ENCODE measurements at regions of chr5 and their contacts with region 1.

Region 1: DNA sequence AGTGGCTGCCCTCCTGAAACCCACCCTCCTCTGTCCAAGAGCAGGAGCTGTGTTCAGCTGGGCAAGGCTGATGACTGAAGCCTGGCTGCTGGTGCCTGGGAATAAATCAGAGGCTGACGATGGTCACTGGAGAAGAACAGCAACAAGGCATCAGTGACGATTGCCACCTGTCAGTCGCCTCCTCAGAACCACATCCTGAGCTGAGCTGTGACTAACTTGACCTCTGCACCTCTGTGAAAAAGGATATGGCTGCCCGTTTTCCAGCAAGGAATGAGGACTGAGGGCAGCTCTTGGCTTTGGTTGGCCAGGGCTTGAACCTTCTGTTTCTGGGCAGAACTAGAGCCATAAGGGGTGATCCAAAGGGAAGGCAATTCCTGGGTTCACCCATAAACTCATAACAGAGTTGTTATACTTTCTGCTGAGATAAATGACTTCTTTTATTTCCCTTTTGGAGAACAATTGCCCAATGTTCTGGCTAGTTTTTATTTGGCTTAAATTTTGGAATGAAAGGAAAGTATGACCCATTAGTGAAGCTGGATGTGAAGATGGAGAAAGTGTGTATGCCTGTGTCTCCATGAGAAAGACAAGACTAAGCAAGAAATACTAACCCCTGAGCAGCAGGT is 40.1 kb downstream of the TRIP13 start:
- DNase-seq: no peak
- H3K4me3 ChIP-seq: no peak overlapping the region
- H3K27ac ChIP-seq: no peak overlapping the region
- H3K4me1 ChIP-seq: no peaks in the 10 kb centered on the region
- H3K27me3 ChIP-seq: no peaks in the 10 kb centered on the region
- CTCF ChIP-seq: no peak

Region 2: GRCh38 chr5:129820-130219 is 802.9 kb before region 1 on chr5:
- CTCF ChIA-PET with region 1: no interaction called
- dilution Hi-C with region 1: no loop called
- in situ Hi-C with region 1: no loop called
- intact Hi-C with region 1: no loop called
- DNase-seq: peak; percentile 9
- H3K4me3 ChIP-seq: no peak overlapping the region
- H3K27ac ChIP-seq: no peak overlapping the region
- H3K4me1 ChIP-seq: no peaks in the 10 kb centered on the region
- H3K27me3 ChIP-seq: peaks cover 2% of the 10 kb centered on the region
- CTCF ChIP-seq: no peak

Region 3: GRCh38 chr5:969408-969839 is 36.7 kb after region 1 on chr5:
- CTCF ChIA-PET with region 1: no interaction called
- dilution Hi-C with region 1: loop called (anchors 5 kb)
- in situ Hi-C with region 1: no loop called
- intact Hi-C with region 1: no loop called
- DNase-seq: no peak
- H3K4me3 ChIP-seq: no peak overlapping the region
- H3K27ac ChIP-seq: no peak overlapping the region
- H3K4me1 ChIP-seq: no peaks in the 10 kb centered on the region
- H3K27me3 ChIP-seq: peaks cover 19% of the 10 kb centered on the region
- CTCF ChIP-seq: no peak

Region 4: DNA sequence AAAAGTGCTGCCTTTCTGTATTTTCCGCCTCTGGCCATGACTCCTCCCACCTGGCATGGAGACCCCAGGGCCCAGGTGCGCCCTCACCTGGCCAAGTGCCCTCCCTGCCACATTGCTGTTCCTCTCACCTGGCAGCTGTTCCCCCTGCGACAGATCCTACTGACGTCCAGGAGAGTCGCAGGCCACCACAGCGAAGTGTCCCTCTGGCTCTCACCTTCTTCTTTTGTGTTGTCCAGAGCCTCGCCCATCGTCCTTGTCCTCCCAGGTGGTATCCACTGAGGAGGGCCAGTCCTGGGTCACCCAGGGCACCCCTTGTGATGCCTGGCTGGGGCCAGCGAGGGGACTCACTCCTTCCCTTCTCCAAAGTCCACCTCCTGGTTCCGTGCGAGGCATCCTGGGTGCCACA is 78.5 kb after region 1 on chr5:
- CTCF ChIA-PET with region 1: no interaction called
- dilution Hi-C with region 1: no loop called
- in situ Hi-C with region 1: no loop called
- intact Hi-C with region 1: loop called (anchors 2 kb)
- DNase-seq: no peak
- H3K4me3 ChIP-seq: no peak overlapping the region
- H3K27ac ChIP-seq: no peak overlapping the region
- H3K4me1 ChIP-seq: peaks cover 13% of the 10 kb centered on the region
- H3K27me3 ChIP-seq: peaks cover 27% of the 10 kb centered on the region
- CTCF ChIP-seq: peak; percentile 54 to 60

Region 5: DNA sequence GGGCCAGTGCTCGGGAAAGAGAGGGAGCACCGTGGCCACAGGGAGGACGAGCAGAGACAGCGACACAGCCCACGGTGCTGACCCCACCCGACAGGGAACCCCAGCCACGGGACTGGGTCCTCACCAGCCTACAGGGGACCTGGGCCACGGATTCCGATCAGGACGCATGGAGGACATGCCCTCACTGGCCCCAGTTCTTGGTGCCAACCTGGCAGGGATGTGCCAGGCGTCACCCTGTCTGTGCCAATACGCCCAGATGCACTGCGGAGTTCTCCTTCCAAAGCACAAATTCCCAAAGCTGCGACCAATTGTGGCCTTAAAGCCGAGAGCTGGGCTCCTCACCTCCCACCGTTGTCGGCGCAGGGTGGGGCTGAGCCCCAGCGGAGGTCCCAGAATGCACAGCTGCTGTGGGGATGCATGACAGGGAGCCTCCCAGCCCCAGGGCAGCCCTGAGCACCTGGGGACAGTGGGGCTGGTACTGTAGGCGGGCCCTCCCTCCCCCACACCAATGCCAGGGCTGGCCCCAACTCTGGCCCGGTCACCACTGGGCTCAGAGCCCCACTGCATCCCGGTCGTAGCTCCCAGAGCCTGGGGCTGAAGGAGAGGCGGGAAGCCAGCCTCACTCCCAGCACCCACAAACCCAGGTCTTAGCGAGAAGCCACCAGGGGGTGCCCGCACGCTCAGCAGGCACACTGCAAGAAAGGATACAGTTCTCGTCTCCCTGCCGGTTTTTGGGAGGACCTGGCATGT is 120.1 kb after region 1 on chr5:
- CTCF ChIA-PET with region 1: no interaction called
- dilution Hi-C with region 1: loop called (anchors 10 kb)
- in situ Hi-C with region 1: no loop called
- intact Hi-C with region 1: no loop called
- DNase-seq: no peak
- H3K4me3 ChIP-seq: no peak overlapping the region
- H3K27ac ChIP-seq: no peak overlapping the region
- H3K4me1 ChIP-seq: no peaks in the 10 kb centered on the region
- H3K27me3 ChIP-seq: no peaks in the 10 kb centered on the region
- CTCF ChIP-seq: peak; percentile 17 to 44

Region 6: DNA sequence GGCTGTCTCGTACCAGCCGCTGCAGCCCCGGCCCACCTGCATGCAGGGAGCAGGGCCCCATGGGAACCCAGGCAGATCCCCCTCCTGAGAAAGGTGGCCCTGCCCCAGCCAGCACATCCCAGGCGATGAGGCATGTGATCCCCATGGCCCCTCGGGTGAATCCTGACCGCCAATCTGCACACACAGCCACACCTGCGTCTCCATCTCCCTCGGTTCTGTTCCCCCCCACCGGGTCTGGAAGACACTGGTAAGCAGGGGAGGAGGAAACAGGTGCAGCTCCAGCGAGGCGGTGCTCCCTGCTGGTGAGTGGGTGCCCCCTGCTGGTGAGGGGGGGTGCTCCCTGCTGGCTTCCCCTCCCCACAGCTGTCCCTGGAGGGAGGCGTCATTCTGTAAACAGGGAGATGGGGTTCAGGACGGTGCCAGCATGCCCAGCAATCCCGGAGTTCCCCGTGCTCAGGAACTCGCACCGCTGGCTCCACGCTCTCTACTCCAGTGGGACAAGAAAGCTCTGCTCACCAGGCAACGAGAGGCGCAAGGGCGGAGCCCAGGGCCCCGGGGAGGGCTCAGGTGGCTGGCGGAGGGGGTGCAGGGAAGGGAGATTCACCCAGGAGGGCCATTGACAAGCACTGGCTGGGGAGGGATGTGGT is 207.6 kb after region 1 on chr5:
- CTCF ChIA-PET with region 1: no interaction called
- dilution Hi-C with region 1: no loop called
- in situ Hi-C with region 1: loop called in 1 of 2 experiments (anchors 25 kb)
- intact Hi-C with region 1: loop called (anchors 2 kb)
- DNase-seq: peak; percentile 56
- H3K4me3 ChIP-seq: no peak overlapping the region
- H3K27ac ChIP-seq: no peak overlapping the region
- H3K4me1 ChIP-seq: peaks cover 16% of the 10 kb centered on the region
- H3K27me3 ChIP-seq: peaks cover 2% of the 10 kb centered on the region
- CTCF ChIP-seq: peak; percentile 29 to 74

Region 7: GRCh38 chr5:1185652-1186350 is 253.1 kb after region 1 on chr5:
- CTCF ChIA-PET with region 1: no interaction called
- dilution Hi-C with region 1: loop called (anchors 5 kb)
- in situ Hi-C with region 1: no loop called
- intact Hi-C with region 1: no loop called
- DNase-seq: no peak
- H3K4me3 ChIP-seq: no peak overlapping the region
- H3K27ac ChIP-seq: no peak overlapping the region
- H3K4me1 ChIP-seq: no peaks in the 10 kb centered on the region
- H3K27me3 ChIP-seq: no peaks in the 10 kb centered on the region
- CTCF ChIP-seq: no peak

Measured in mammary epithelial cell (primary cell).